ENCODE measurements at regions of chr6 and their contacts with region 1.

Region 1: GRCh38 chr6:16420715-16421461 is 182.5 kb downstream of the GMPR start:
- DNase-seq: peak; percentile 87
- H3K4me3 Mint-ChIP-seq: peak overlapping the region; percentile 79
- H3K27ac Mint-ChIP-seq: peak overlapping the region; percentile 90
- H3K4me1 Mint-ChIP-seq: peaks cover 50% of the 10 kb centered on the region
- H3K27me3 Mint-ChIP-seq: no peaks in the 10 kb centered on the region

Region 2: GRCh38 chr6:16319813-16320532 is 100.9 kb before region 1 on chr6:
- intact Hi-C with region 1: loop called (anchors 2 kb)
- DNase-seq: peak; percentile 90
- H3K4me3 Mint-ChIP-seq: peak overlapping the region; percentile 73
- H3K27ac Mint-ChIP-seq: peak overlapping the region; percentile 84
- H3K4me1 Mint-ChIP-seq: peaks cover 66% of the 10 kb centered on the region
- H3K27me3 Mint-ChIP-seq: no peaks in the 10 kb centered on the region

Region 3: GRCh38 chr6:16409531-16410441 is 11.1 kb before region 1 on chr6:
- intact Hi-C with region 1: loop called (anchors 1 kb)
- DNase-seq: peak; percentile 86
- H3K4me3 Mint-ChIP-seq: no peak overlapping the region
- H3K27ac Mint-ChIP-seq: peak overlapping the region; percentile 26
- H3K4me1 Mint-ChIP-seq: peaks cover 52% of the 10 kb centered on the region
- H3K27me3 Mint-ChIP-seq: no peaks in the 10 kb centered on the region

Region 4: GRCh38 chr6:16452348-16452747 is 31.5 kb after region 1 on chr6:
- intact Hi-C with region 1: loop called (anchors 1 kb)
- DNase-seq: no peak
- H3K4me3 Mint-ChIP-seq: no peak overlapping the region
- H3K27ac Mint-ChIP-seq: no peak overlapping the region
- H3K4me1 Mint-ChIP-seq: peaks cover 13% of the 10 kb centered on the region
- H3K27me3 Mint-ChIP-seq: no peaks in the 10 kb centered on the region

Region 5: GRCh38 chr6:16481697-16482399 is 61.0 kb after region 1 on chr6:
- intact Hi-C with region 1: loop called (anchors 2 kb)
- DNase-seq: peak; percentile 92
- H3K4me3 Mint-ChIP-seq: peak overlapping the region; percentile 54
- H3K27ac Mint-ChIP-seq: peak overlapping the region; percentile 99
- H3K4me1 Mint-ChIP-seq: peaks cover 82% of the 10 kb centered on the region
- H3K27me3 Mint-ChIP-seq: no peaks in the 10 kb centered on the region

Region 6: DNA sequence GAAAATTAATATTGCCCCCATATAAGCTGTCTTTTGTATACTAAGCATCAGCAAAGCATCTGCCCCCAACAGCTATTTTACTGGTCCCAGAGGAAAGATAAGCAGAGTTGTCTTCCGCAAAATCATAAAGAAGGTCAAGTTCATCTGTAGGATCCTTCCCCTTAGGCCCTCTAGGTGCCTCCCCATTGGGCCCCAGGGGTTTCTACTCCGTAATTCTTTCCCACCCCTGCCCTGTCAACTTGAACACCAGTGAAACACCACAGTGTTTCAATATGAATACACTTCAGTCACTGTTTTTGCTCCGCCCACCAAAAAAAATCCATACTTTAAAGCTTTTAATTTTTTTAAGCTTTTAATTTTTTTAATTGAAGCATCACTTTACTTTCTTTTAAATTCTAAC is 181.1 kb after region 1 on chr6:
- intact Hi-C with region 1: no loop called
- DNase-seq: peak; percentile 68
- H3K4me3 Mint-ChIP-seq: peak overlapping the region; percentile 9
- H3K27ac Mint-ChIP-seq: peak overlapping the region; percentile 27
- H3K4me1 Mint-ChIP-seq: peaks cover 27% of the 10 kb centered on the region
- H3K27me3 Mint-ChIP-seq: no peaks in the 10 kb centered on the region

Region 7: GRCh38 chr6:16690608-16691198 is 269.8 kb after region 1 on chr6:
- intact Hi-C with region 1: loop called (anchors 2 kb)
- DNase-seq: peak; percentile 74
- H3K4me3 Mint-ChIP-seq: peak overlapping the region; percentile 81
- H3K27ac Mint-ChIP-seq: peak overlapping the region; percentile 99
- H3K4me1 Mint-ChIP-seq: peaks cover 73% of the 10 kb centered on the region
- H3K27me3 Mint-ChIP-seq: no peaks in the 10 kb centered on the region